B cell (primary cell): ENCODE measurements at regions of chr10 and their contacts with region 1.

Region 1: GRCh38 chr10:71319042-71319799 is at the start of gene SLC29A3:
- DNase-seq: peak; percentile 88
- ATAC-seq: peak; percentile 90
- H3K4me3 ChIP-seq: peak within 1 kb of the TSS; percentile 34 to 84 (median 78)
- H3K4me3 Mint-ChIP-seq: peak within 1 kb of the TSS; percentile 99
- H3K27ac ChIP-seq: peak within 1 kb of the TSS in 1 of 2 donors; percentile 72
- H3K27ac Mint-ChIP-seq: peak within 1 kb of the TSS; percentile 94
- H3K4me1 ChIP-seq: peaks cover 8 to 18% of the 10 kb centered on the region in 2 donors
- H3K4me1 Mint-ChIP-seq: peaks cover 17% of the 10 kb centered on the region
- H3K27me3 ChIP-seq: no peaks in the 10 kb centered on the region
- H3K27me3 Mint-ChIP-seq: no peaks in the 10 kb centered on the region
- CTCF ChIP-seq: peak; percentile 71
- total RNA-seq, gene SLC29A3: 6.7 and 8.2 TPM in 2 replicates

Region 2: GRCh38 chr10:71371750-71372166 is 52.5 kb after region 1 on chr10:
- CTCF ChIA-PET with region 1: interaction called, 35 read pairs
- POLR2A ChIA-PET with region 1: interaction called, 4 read pairs
- intact Hi-C with region 1: loop called (anchors 1 kb)
- DNase-seq: peak; percentile 46
- ATAC-seq: peak; percentile 32
- H3K4me3 ChIP-seq: no peak overlapping the region
- H3K4me3 Mint-ChIP-seq: peak overlapping the region; percentile 57
- H3K27ac ChIP-seq: peak overlapping the region; percentile 75 to 78
- H3K27ac Mint-ChIP-seq: peak overlapping the region; percentile 91
- H3K4me1 ChIP-seq: peaks cover 35 to 46% of the 10 kb centered on the region in 2 donors
- H3K4me1 Mint-ChIP-seq: peaks cover 39% of the 10 kb centered on the region
- H3K27me3 ChIP-seq: no peaks in the 10 kb centered on the region
- H3K27me3 Mint-ChIP-seq: no peaks in the 10 kb centered on the region
- CTCF ChIP-seq: no peak

Region 3: GRCh38 chr10:71378336-71379117 is 59.3 kb after region 1 on chr10:
- CTCF ChIA-PET with region 1: interaction called, 35 read pairs
- POLR2A ChIA-PET with region 1: no interaction called
- intact Hi-C with region 1: loop called (anchors 1 kb)
- DNase-seq: peak; percentile 70
- ATAC-seq: no peak
- H3K4me3 ChIP-seq: peak overlapping the region in 1 of 5 experiments; percentile 22
- H3K4me3 Mint-ChIP-seq: peak overlapping the region; percentile 65
- H3K27ac ChIP-seq: peak overlapping the region; percentile 11 to 48
- H3K27ac Mint-ChIP-seq: peak overlapping the region; percentile 84
- H3K4me1 ChIP-seq: peaks cover 31 to 47% of the 10 kb centered on the region in 2 donors
- H3K4me1 Mint-ChIP-seq: peaks cover 37% of the 10 kb centered on the region
- H3K27me3 ChIP-seq: no peaks in the 10 kb centered on the region
- H3K27me3 Mint-ChIP-seq: no peaks in the 10 kb centered on the region
- CTCF ChIP-seq: no peak

Region 4: DNA sequence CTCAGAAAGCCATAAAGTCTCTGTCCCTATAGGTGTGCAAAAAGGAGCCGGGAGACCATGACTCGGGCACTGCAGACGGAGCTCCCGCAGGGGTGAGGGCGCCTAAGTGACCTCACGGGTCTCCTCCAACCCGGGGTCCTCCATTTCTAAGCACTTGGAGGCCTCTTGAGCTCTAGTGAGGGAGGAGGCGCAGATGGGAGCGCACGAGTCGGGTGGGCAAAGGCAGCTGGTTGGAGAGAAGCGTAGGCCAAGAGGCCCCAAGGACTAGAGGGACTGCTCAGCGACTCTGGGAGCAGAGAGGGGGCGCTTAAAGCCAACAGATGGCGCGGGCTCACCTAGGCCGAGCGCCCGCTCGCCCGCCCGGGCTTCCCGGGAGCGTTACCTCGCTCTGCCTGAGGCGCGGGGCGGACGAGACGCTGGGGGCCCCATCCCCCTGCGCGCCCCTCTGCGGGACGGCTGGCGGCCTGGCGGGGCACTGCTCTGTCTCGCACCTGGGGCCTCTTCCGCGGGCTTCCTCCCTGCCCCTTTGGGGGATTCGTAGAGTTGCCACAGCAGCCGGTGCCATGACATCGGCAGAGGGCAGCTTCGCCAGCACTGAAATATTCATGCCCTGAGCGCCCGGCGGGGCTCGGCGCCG is 77.0 kb after region 1 on chr10:
- CTCF ChIA-PET with region 1: interaction called, 10 read pairs
- POLR2A ChIA-PET with region 1: interaction called, 3 read pairs
- intact Hi-C with region 1: no loop called
- DNase-seq: peak; percentile 68
- ATAC-seq: peak; percentile 66
- H3K4me3 ChIP-seq: peak overlapping the region in 4 of 5 experiments; percentile 24 to 58 (median 51)
- H3K4me3 Mint-ChIP-seq: peak overlapping the region; percentile 78
- H3K27ac ChIP-seq: no peak overlapping the region
- H3K27ac Mint-ChIP-seq: no peak overlapping the region
- H3K4me1 ChIP-seq: peaks cover 17% of the 10 kb centered on the region in 2 donors
- H3K4me1 Mint-ChIP-seq: peaks cover 11% of the 10 kb centered on the region
- H3K27me3 ChIP-seq: peaks cover 0 to 56% (median 22%) of the 10 kb centered on the region in 4 experiments
- H3K27me3 Mint-ChIP-seq: peaks cover 57% of the 10 kb centered on the region
- CTCF ChIP-seq: no peak

Region 5: GRCh38 chr10:71569775-71570588 is 250.8 kb after region 1 on chr10:
- CTCF ChIA-PET with region 1: interaction called, 186 read pairs
- POLR2A ChIA-PET with region 1: no interaction called
- intact Hi-C with region 1: no loop called
- DNase-seq: peak; percentile 77
- ATAC-seq: peak; percentile 57
- H3K4me3 ChIP-seq: no peak overlapping the region
- H3K4me3 Mint-ChIP-seq: no peak overlapping the region
- H3K27ac ChIP-seq: no peak overlapping the region
- H3K27ac Mint-ChIP-seq: no peak overlapping the region
- H3K4me1 ChIP-seq: no peaks in the 10 kb centered on the region
- H3K4me1 Mint-ChIP-seq: no peaks in the 10 kb centered on the region
- H3K27me3 ChIP-seq: no peaks in the 10 kb centered on the region
- H3K27me3 Mint-ChIP-seq: peaks cover 5% of the 10 kb centered on the region
- CTCF ChIP-seq: peak; percentile 86

Region 6: GRCh38 chr10:71608819-71609768 is 289.9 kb after region 1 on chr10:
- CTCF ChIA-PET with region 1: interaction called, 79 read pairs
- POLR2A ChIA-PET with region 1: no interaction called
- intact Hi-C with region 1: loop called (anchors 1 kb)
- DNase-seq: peak; percentile 75
- ATAC-seq: no peak
- H3K4me3 ChIP-seq: no peak overlapping the region
- H3K4me3 Mint-ChIP-seq: no peak overlapping the region
- H3K27ac ChIP-seq: no peak overlapping the region
- H3K27ac Mint-ChIP-seq: no peak overlapping the region
- H3K4me1 ChIP-seq: no peaks in the 10 kb centered on the region
- H3K4me1 Mint-ChIP-seq: peaks cover 2% of the 10 kb centered on the region
- H3K27me3 ChIP-seq: peaks cover 0 to 15% (median 0%) of the 10 kb centered on the region in 4 experiments
- H3K27me3 Mint-ChIP-seq: peaks cover 10% of the 10 kb centered on the region
- CTCF ChIP-seq: peak; percentile 76